Endothelial cell of umbilical vein (primary cell): ENCODE measurements at regions of chr5 and their contacts with region 1.

Region 1: GRCh38 chr5:41835645-41836044 is 34.6 kb downstream of the OXCT1 start:
- DNase-seq: peak; percentile 89
- H3K4me3 ChIP-seq: no peak overlapping the region
- H3K27ac ChIP-seq: peak overlapping the region; percentile 60
- H3K4me1 ChIP-seq: peaks cover 38% of the 10 kb centered on the region
- H3K27me3 ChIP-seq: no peaks in the 10 kb centered on the region
- CTCF ChIP-seq: no peak
- POLR2A ChIP-seq: peak; percentile 29

Region 2: GRCh38 chr5:41482715-41483114 is 352.9 kb before region 1 on chr5:
- CTCF ChIA-PET with region 1: no interaction called
- POLR2A ChIA-PET with region 1: no interaction called
- dilution Hi-C with region 1: no loop called
- intact Hi-C with region 1: no loop called
- DNase-seq: no peak
- H3K4me3 ChIP-seq: no peak overlapping the region
- H3K27ac ChIP-seq: no peak overlapping the region
- H3K4me1 ChIP-seq: no peaks in the 10 kb centered on the region
- H3K27me3 ChIP-seq: no peaks in the 10 kb centered on the region
- CTCF ChIP-seq: no peak
- POLR2A ChIP-seq: no peak

Region 3: GRCh38 chr5:41722359-41722950 is 113.2 kb before region 1 on chr5:
- CTCF ChIA-PET with region 1: interaction called, 66 read pairs
- POLR2A ChIA-PET with region 1: no interaction called
- dilution Hi-C with region 1: no loop called
- intact Hi-C with region 1: no loop called
- DNase-seq: peak; percentile 26
- H3K4me3 ChIP-seq: no peak overlapping the region
- H3K27ac ChIP-seq: no peak overlapping the region
- H3K4me1 ChIP-seq: no peaks in the 10 kb centered on the region
- H3K27me3 ChIP-seq: no peaks in the 10 kb centered on the region
- CTCF ChIP-seq: peak in 1 of 2 donors; percentile 21
- POLR2A ChIP-seq: no peak

Region 4: GRCh38 chr5:41788800-41789395 is 46.7 kb before region 1 on chr5:
- CTCF ChIA-PET with region 1: interaction called, 4 read pairs
- POLR2A ChIA-PET with region 1: no interaction called
- dilution Hi-C with region 1: no loop called
- intact Hi-C with region 1: loop called (anchors 1 kb)
- DNase-seq: peak; percentile 95
- H3K4me3 ChIP-seq: peak overlapping the region in 1 of 3 experiments; percentile 14
- H3K27ac ChIP-seq: peak overlapping the region; percentile 81
- H3K4me1 ChIP-seq: peaks cover 45% of the 10 kb centered on the region
- H3K27me3 ChIP-seq: no peaks in the 10 kb centered on the region
- CTCF ChIP-seq: no peak
- POLR2A ChIP-seq: no peak

Region 5: GRCh38 chr5:41794473-41794872 is 41.2 kb before region 1 on chr5:
- CTCF ChIA-PET with region 1: interaction called, 5 read pairs
- POLR2A ChIA-PET with region 1: no interaction called
- dilution Hi-C with region 1: no loop called
- intact Hi-C with region 1: loop called (anchors 1 kb)
- DNase-seq: peak; percentile 95
- H3K4me3 ChIP-seq: peak overlapping the region in 1 of 3 experiments; percentile 47
- H3K27ac ChIP-seq: peak overlapping the region; percentile 97
- H3K4me1 ChIP-seq: peaks cover 52% of the 10 kb centered on the region
- H3K27me3 ChIP-seq: no peaks in the 10 kb centered on the region
- CTCF ChIP-seq: no peak
- POLR2A ChIP-seq: peak; percentile 43

Region 6: GRCh38 chr5:41809128-41809527 is 26.5 kb before region 1 on chr5:
- CTCF ChIA-PET with region 1: interaction called, 14 read pairs
- POLR2A ChIA-PET with region 1: no interaction called
- dilution Hi-C with region 1: no loop called
- intact Hi-C with region 1: no loop called
- DNase-seq: no peak
- H3K4me3 ChIP-seq: no peak overlapping the region
- H3K27ac ChIP-seq: no peak overlapping the region
- H3K4me1 ChIP-seq: peaks cover 24% of the 10 kb centered on the region
- H3K27me3 ChIP-seq: no peaks in the 10 kb centered on the region
- CTCF ChIP-seq: no peak
- POLR2A ChIP-seq: no peak

Region 7: GRCh38 chr5:41817625-41818301 is 17.9 kb before region 1 on chr5:
- CTCF ChIA-PET with region 1: interaction called, 6 read pairs
- POLR2A ChIA-PET with region 1: no interaction called
- dilution Hi-C with region 1: no loop called
- intact Hi-C with region 1: loop called (anchors 2 kb)
- DNase-seq: no peak
- H3K4me3 ChIP-seq: no peak overlapping the region
- H3K27ac ChIP-seq: no peak overlapping the region
- H3K4me1 ChIP-seq: peaks cover 18% of the 10 kb centered on the region
- H3K27me3 ChIP-seq: no peaks in the 10 kb centered on the region
- CTCF ChIP-seq: no peak
- POLR2A ChIP-seq: no peak